A549 (cell line): ENCODE measurements at regions of chr1 and their contacts with region 1.

Region 1: DNA sequence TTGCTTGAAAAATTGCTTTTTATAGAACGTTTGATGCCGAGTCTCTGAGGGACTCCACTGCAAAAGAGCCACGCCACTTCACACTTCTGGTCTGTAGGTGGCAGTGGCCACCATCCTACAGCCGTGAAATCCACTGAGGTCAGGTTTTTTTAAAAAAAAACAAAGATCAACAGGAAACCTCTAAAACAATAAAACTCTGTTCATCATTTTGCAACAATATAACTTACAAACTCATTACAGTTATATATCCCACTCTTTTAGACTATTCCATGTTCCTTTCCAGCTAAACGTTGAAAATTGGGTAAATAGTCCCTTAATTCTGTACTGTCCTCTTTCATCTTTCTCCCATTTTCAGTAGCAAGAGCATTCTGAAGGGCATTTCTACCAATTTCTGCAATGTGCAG is 64.6 kb upstream of the FMN2 start:
- DNase-seq: peak; percentile 59 to 60
- ATAC-seq: peak; percentile 80 to 83; a peak in 5 of 6 replicates
- H3K4me3 ChIP-seq: no peak overlapping the region
- H3K27ac ChIP-seq: no peak overlapping the region
- H3K4me1 ChIP-seq: peaks cover 30% of the 10 kb centered on the region
- CTCF ChIP-seq: peak; percentile 96
- EP300 ChIP-seq: no peak
- POLR2A ChIP-seq: no peak
- RAD21 ChIP-seq: peak; percentile 93 to 95

Region 2: GRCh38 chr1:240004086-240004749 is 22.8 kb before region 1 on chr1:
- CTCF ChIA-PET with region 1: interaction called, 10 read pairs
- POLR2A ChIA-PET with region 1: no interaction called
- DNase-seq: peak; percentile 37 to 46
- ATAC-seq: peak in 1 of 2 experiments; percentile 70; a peak in 3 of 6 replicates
- H3K4me3 ChIP-seq: no peak overlapping the region
- H3K27ac ChIP-seq: no peak overlapping the region
- H3K4me1 ChIP-seq: peaks cover 11% of the 10 kb centered on the region
- CTCF ChIP-seq: peak; percentile 75
- EP300 ChIP-seq: no peak
- POLR2A ChIP-seq: no peak
- RAD21 ChIP-seq: peak; percentile 15 to 26; a peak in 1 of 5 replicates

Region 3: GRCh38 chr1:240149484-240150094 is 122.5 kb after region 1 on chr1:
- CTCF ChIA-PET with region 1: interaction called, 49 read pairs
- POLR2A ChIA-PET with region 1: interaction called, 3 read pairs
- DNase-seq: peak; percentile 22 to 41
- ATAC-seq: peak; percentile 56 to 81; a peak in 4 of 6 replicates
- H3K4me3 ChIP-seq: no peak overlapping the region
- H3K27ac ChIP-seq: no peak overlapping the region
- H3K4me1 ChIP-seq: peaks cover 7% of the 10 kb centered on the region; the same call in 1 of the 3 replicates
- CTCF ChIP-seq: peak; percentile 76
- EP300 ChIP-seq: no peak
- POLR2A ChIP-seq: no peak
- RAD21 ChIP-seq: peak; percentile 42 to 55

Region 4: DNA sequence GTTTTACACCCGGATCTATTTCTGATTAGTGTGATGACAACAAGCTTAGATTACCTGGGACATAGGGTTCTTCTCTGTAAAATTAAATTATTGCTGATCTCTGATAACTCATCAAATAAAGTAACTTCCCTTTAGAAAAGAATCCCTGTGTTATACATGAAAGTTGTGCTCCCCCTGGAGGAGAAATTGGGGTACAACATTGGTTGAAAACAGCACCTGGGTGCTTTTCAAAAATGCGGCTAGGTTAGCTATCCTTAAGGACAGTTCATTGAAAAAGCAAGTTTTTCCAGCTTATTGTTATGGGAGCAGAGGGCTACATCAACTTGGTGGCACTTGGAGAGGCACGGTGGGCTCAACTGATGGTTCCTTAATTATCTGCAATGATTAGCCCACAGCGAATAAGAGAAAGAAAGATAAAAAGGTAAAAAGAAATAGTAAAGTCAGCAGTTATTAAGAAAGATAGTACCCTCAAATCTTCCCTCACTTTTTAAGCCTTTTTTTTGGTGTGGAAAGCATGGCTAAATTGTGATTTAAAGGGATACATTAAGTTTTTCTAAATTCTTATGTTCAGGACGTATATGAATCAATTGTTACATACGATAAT is 162.4 kb after region 1 on chr1:
- CTCF ChIA-PET with region 1: interaction called, 13 read pairs
- POLR2A ChIA-PET with region 1: no interaction called
- DNase-seq: peak; percentile 40 to 61
- ATAC-seq: peak in 1 of 2 experiments; percentile 60; a peak in 2 of 6 replicates
- H3K4me3 ChIP-seq: no peak overlapping the region
- H3K27ac ChIP-seq: 0 out of 6 replicates have a peak overlapping the region, but pooled peaks of 1 of the 2 experiments have one; percentile 42
- H3K4me1 ChIP-seq: peaks cover 23% of the 10 kb centered on the region
- CTCF ChIP-seq: peak; percentile 80
- EP300 ChIP-seq: no peak
- POLR2A ChIP-seq: no peak
- RAD21 ChIP-seq: peak; percentile 62 to 65

Region 5: DNA sequence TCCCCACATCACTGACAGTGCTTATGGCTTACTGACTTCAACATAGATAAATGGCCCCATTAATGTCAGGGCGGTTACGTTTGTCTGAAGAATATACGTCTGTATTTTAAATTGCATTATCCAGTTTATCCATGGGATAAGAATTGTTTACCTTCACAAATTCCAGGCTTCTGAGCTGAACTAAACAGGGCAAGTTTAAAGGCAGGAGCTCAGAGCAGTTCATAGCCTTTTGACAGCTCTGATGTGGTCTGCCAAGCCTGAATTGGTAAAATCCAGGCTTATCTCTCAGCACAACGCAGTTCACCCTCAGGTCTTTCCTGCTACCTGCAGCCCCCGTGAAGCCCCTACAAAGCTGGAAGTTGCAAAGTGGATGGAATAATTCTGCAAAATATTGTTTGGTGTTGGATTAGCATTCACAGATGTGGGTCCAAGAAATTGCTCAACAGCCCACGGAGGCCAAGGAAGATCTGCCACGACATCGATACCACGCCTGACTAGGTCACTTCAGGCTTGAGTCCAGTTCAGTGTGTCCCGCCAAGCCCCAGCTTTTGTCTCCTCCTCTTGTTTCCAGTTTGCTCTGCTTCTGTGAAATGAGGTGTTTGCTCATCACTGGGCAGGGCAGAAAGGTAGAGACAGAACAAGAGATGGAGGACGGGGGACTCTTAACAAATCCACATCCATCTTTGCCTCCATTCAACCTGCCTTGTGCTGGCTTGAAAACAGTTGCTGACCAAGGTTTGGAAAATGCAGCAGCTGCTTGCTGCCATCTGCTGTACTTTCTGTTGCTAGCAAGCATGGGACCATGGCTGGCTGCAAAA is 664.7 kb after region 1 on chr1:
- CTCF ChIA-PET with region 1: interaction called, 11 read pairs
- POLR2A ChIA-PET with region 1: no interaction called
- DNase-seq: peak; percentile 26 to 63
- ATAC-seq: peak; percentile 94 to 95
- H3K4me3 ChIP-seq: no peak overlapping the region
- H3K27ac ChIP-seq: peak overlapping the region in 1 of 2 experiments; percentile 36; a peak in 1 of 6 replicates
- H3K4me1 ChIP-seq: peaks cover 3% of the 10 kb centered on the region; the same call in 1 of the 3 replicates
- CTCF ChIP-seq: peak; percentile 68
- EP300 ChIP-seq: no peak
- POLR2A ChIP-seq: no peak
- RAD21 ChIP-seq: peak; percentile 87